Left ventricle myocardium superior (tissue), 1 donor: ENCODE measurements at regions of chr7 and their contacts with region 1.

Region 1: DNA sequence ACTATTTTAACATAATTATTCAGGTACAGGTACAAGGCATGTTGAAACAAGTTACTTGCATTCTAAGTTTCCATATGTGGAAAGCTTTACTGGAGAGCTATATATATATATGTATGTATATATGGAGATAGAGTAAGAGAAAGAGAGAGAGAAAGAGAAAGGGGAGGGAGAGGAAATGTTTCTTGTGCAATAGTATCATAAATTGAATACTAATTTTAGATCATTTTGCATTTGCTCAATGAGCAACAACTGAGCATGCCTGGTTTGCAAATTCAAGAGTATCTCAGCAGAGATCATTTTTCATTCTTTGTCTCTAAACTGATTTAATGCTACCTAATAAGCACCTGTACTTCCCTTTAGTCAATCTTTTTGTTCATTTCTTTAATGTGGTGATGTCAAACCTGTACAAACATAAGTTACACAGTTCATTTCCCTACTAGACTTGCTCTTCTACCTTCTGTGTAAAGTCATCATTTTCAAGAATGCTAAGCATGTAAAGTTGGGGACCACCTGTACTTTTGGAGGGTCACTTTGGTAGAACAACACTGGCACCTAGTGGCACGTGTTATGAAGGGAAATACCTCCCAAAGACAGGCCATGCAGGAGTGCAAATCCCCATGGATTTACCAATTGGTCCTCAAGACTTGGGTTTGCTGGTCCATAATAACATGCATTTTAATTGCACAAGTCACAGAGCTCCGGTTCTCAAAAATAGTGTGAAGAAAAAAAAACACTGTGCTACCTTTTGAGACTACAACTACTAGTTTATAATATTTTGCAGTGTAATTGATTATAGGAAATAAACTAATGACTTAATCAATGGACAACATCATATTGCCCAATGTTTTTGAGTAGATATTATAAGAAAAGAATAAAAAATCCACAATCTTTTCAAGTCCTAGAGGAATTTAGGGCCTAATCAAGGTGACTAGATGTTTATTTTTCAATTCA is 431.2 kb upstream of the IGFBP3 start:
- DNase-seq: no peak
- ATAC-seq: peak; percentile 53

Region 2: GRCh38 chr7:45923290-45923689 is 429.0 kb before region 1 on chr7:
- intact Hi-C with region 1: loop called (anchors 5 kb)
- DNase-seq: peak; percentile 86
- ATAC-seq: peak; percentile 57

Region 3: DNA sequence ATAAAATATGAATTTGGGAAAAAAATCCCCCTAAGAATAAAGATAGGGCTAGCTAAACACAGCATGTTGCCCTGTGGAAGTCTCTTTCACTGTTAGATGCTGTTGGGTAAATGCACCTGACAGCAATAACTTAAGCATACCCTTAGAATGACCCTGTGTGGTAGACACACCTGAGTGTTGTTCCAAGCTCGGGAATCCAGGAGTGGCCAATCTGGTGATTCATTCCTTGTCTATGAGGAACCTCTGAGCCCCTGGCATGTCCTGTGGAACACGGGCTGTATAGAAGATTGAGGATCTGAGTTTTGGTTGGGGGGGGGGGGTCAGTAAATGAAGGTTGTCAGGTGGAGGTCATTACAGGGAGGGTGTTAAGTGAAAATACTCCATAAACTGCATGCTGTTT is 298.8 kb after region 1 on chr7:
- intact Hi-C with region 1: no loop called
- DNase-seq: no peak
- ATAC-seq: no peak